Activated CD4-positive, alpha-beta T cell treated with anti-CD3 and anti-CD28 coated beads for 36 hours (primary cell): ENCODE measurements at regions of chr16 and their contacts with region 1.

Region 1: GRCh38 chr16:4116337-4117249 is at the start of gene ADCY9:
- DNase-seq: peak; percentile 86
- ATAC-seq: peak; percentile 75
- H3K4me3 Mint-ChIP-seq: peak within 1 kb of the TSS; percentile 78
- H3K27ac Mint-ChIP-seq: peak within 1 kb of the TSS; percentile 78
- H3K4me1 Mint-ChIP-seq: peaks cover 36% of the 10 kb centered on the region
- H3K27me3 Mint-ChIP-seq: peaks cover 7% of the 10 kb centered on the region
- total RNA-seq, gene ADCY9: 5.3 to 6.2 TPM

Region 2: GRCh38 chr16:3717235-3718018 is 399.2 kb before region 1 on chr16 and contains the start of gene TRAP1:
- CTCF ChIA-PET with region 1: no interaction called
- POLR2A ChIA-PET with region 1: no interaction called
- intact Hi-C with region 1: loop called in 1 of 2 experiments (anchors 1 kb)
- DNase-seq: peak; percentile 95
- ATAC-seq: peak; percentile 95
- H3K4me3 Mint-ChIP-seq: peak within 1 kb of the TSS; percentile 89
- H3K27ac Mint-ChIP-seq: peak within 1 kb of the TSS; percentile 92
- H3K4me1 Mint-ChIP-seq: peaks cover 44% of the 10 kb centered on the region
- H3K27me3 Mint-ChIP-seq: no peaks in the 10 kb centered on the region
- total RNA-seq, gene TRAP1: 306 to 360 TPM

Region 3: DNA sequence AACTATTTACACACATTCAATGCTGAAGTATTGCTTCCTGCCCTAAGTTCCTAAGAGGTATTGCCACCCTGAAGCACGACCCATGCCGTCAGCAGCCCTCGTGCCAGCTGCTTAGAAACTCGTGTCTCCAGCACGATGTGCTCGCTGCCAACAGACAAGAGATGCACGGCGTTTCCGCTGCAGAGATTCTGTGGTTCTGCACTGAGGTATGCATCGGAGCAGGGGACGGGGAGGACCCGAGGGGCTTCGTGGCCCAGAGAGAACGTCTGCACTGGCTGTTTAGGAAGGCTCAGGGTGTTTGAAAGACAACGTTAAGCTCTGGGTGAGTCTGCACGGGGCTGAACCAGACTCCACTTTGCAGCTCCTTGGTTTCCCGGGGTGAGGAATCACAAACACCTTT is 153.4 kb before region 1 on chr16:
- CTCF ChIA-PET with region 1: no interaction called
- POLR2A ChIA-PET with region 1: no interaction called
- intact Hi-C with region 1: loop called in 1 of 2 experiments (anchors 2 kb)
- DNase-seq: peak; percentile 43
- ATAC-seq: no peak
- H3K4me3 Mint-ChIP-seq: no peak overlapping the region
- H3K27ac Mint-ChIP-seq: no peak overlapping the region
- H3K4me1 Mint-ChIP-seq: peaks cover 16% of the 10 kb centered on the region
- H3K27me3 Mint-ChIP-seq: no peaks in the 10 kb centered on the region

Region 4: DNA sequence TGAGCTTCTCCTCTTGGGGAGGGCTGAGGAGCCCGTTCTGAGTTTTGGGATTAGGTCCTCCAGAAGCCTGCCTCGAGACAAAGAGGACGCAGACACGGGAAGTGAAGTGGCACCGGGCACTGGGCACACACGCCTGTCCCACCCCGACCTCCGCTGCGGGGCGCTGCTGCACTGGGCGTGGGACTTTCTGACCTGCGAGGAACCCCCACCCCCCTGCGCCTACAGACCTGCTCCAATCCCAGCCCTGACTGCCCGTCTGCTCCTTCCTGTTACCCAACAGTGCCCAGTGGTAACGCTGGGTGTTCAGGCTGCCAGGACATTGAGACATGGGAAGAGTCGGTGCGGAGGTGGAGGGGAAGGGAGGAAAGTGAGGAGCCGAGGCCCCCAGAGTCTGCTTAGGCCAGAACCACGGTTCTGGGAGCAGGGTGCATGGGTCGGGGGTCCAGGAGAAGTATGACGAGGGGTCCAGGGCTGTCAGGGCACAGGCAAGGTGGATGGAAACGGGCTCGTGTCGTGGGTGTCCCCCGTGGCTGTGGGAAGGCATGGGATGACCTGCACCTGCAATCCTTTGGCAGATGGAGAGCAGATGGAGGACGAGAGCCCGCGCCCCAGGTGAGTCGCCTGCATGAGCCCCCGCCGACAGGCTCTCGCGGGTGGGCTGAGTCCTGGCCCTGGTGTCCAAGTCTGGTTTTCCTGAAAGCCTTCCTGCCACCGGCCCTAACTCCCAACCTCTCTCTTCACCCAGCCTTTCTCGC is 124.1 kb before region 1 on chr16:
- CTCF ChIA-PET with region 1: no interaction called
- POLR2A ChIA-PET with region 1: no interaction called
- intact Hi-C with region 1: loop called (anchors 5 to 10 kb)
- DNase-seq: peak; percentile 55
- ATAC-seq: peak; percentile 60
- H3K4me3 Mint-ChIP-seq: no peak overlapping the region
- H3K27ac Mint-ChIP-seq: no peak overlapping the region
- H3K4me1 Mint-ChIP-seq: no peaks in the 10 kb centered on the region
- H3K27me3 Mint-ChIP-seq: no peaks in the 10 kb centered on the region

Region 5: DNA sequence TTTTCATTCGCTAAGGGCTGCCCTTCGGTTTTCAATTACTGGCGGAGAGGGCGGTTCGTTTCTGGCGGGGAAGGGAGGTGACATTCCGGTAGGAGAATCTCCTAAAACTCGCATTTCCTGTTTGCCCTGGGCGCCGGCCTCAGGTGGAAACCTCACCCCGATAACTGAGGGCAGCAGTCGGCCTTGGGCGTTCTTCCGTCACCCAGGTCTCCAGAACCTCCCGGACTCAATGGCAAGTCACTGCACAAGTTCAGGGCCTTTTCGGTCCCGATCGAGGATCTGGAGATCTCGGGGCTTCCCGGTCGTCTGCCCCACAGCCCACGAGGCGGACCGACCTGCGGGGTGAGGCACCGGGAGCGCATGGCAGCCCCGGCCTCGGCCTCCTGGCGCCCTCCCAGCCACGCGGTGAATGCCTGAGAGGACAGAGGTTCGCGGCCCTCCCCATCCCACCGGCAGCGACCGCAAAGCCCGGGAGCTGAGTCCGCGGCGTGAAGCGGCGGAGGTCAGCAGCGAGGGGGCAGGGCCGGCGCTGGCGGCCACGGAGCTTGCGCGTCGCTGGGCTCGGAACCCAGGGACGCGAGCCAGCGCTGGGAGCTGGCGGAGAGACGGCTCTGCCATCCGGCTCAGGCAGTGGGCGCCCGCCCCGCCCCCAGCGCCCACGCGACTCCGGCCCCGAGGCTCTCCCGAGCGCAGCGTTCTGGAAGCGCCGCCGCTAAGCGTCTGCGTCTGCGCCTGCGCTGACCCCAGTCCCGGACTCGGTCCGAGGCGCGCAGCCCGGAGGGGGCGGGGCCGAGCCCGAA is 66.8 kb after region 1 on chr16:
- CTCF ChIA-PET with region 1: interaction called, 3 read pairs
- POLR2A ChIA-PET with region 1: no interaction called
- intact Hi-C with region 1: loop called in 1 of 2 experiments (anchors 1 kb)
- DNase-seq: peak; percentile 94
- ATAC-seq: peak; percentile 95
- H3K4me3 Mint-ChIP-seq: peak overlapping the region; percentile 76
- H3K27ac Mint-ChIP-seq: peak overlapping the region; percentile 47
- H3K4me1 Mint-ChIP-seq: peaks cover 6% of the 10 kb centered on the region
- H3K27me3 Mint-ChIP-seq: no peaks in the 10 kb centered on the region